HEK293 (cell line): ENCODE measurements at regions of chr15 and their contacts with region 1.

Region 1: GRCh38 chr15:85730001-85730820 is 64.5 kb downstream of the KLHL25 start:
- H3K4me3 ChIP-seq: no peak overlapping the region
- H3K27ac ChIP-seq: no peak overlapping the region
- H3K4me1 ChIP-seq: no peaks in the 10 kb centered on the region
- CTCF ChIP-seq: peak; percentile 62

Region 2: DNA sequence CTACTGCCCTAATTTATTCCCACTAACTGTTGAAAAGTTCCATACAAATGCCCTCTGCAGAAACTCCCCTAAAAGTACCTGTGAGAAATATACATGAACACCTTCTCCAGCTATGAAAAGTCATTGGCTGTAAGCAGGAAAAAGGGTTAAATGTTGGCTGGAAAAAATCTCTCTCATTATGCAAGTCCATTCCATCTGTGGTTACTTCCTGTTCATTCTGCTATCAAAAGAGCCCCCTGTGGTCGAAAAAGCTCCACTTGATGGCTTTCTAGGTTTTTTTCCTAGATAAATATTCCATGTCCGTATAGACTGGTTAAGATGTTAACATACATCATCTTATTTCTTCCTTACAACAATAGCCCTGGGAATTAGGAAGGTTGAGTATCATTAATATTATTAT is 406.0 kb before region 1 on chr15:
- CTCF ChIA-PET with region 1: no interaction called
- POLR2A ChIA-PET with region 1: no interaction called
- H3K4me3 ChIP-seq: no peak overlapping the region
- H3K27ac ChIP-seq: no peak overlapping the region
- H3K4me1 ChIP-seq: no peaks in the 10 kb centered on the region
- CTCF ChIP-seq: no peak

Region 3: GRCh38 chr15:85831415-85832113 is 101.4 kb after region 1 on chr15:
- CTCF ChIA-PET with region 1: interaction called, 17 read pairs
- POLR2A ChIA-PET with region 1: no interaction called
- H3K4me3 ChIP-seq: no peak overlapping the region
- H3K27ac ChIP-seq: no peak overlapping the region
- H3K4me1 ChIP-seq: no peaks in the 10 kb centered on the region
- CTCF ChIP-seq: peak; percentile 59

Region 4: DNA sequence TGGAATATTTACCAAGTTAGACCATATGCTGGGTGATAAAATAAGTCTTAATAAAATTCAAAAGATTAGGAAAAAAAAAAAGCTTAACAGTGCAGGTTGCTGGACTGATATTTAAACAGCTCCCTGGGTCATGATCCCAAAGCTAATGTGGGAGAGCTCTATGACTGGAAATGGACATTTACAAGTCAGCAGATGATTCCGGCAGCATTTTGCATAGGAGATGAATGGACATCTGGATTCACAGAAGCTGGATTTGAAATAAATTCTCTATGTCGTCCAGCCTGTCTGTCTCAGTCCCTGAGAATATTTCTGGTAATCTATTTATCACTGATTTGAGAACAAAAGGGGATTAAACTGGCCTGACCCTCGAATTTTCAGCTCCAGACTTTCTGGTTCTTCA is 116.8 kb after region 1 on chr15:
- CTCF ChIA-PET with region 1: interaction called, 30 read pairs
- POLR2A ChIA-PET with region 1: no interaction called
- H3K4me3 ChIP-seq: no peak overlapping the region
- H3K27ac ChIP-seq: no peak overlapping the region
- H3K4me1 ChIP-seq: no peaks in the 10 kb centered on the region
- CTCF ChIP-seq: no peak